K562 (cell line): ENCODE measurements at regions of chr22 and their contacts with region 1.

Region 1: DNA sequence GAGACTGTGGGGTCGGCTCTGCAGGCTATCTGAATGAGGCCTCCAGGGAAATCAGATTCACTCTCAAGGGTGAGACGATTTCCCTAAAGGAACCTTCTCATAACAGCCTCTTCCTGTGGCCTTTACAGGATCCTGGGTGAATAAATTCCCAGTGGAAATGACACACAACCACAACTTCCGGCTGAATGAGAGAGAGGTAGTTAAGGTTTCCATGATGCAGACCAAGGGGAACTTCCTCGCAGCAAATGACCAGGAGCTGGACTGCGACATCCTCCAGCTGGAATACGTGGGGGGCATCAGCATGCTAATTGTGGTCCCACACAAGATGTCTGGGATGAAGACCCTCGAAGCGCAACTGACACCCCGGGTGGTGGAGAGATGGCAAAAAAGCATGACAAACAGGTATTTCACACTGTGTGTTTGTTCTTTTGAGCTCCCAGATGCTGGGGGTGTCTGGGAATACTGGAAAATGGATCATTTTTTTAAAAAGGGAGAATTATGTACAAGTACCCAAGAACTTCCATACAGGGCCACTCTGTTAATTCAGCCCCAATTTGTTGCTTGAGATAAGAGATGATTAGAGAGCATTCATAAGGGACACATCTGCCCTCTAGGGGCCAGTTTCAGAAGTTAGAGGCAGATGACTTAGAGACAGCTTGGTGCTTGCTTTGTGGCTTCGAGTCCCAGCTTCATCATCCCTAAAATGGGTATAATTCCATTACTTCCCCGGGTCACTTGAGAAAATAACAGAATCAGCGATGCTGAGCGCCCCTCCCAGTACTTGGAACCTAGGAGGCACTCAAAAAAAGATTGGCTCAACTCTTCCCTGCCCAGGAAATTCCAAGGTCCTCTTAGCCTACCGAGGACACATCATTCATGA is 10.2 kb downstream of the SERPIND1 start:
- DNase-seq: peak; percentile 93 to 98 (median 96)
- ATAC-seq: peak; percentile 96
- H3K4me3 ChIP-seq: no peak overlapping the region
- H3K27ac ChIP-seq: no peak overlapping the region
- H3K4me1 ChIP-seq: peaks cover under 1 to 12% of the 10 kb centered on the region in 2 experiments; a peak in 3 of 5 replicates
- H3K27me3 ChIP-seq: no peaks in the 10 kb centered on the region
- CTCF ChIP-seq: peak in 2 of 3 experiments; percentile 99 to 100; a peak in 4 of 6 replicates
- EP300 ChIP-seq: peak; percentile 75; the same call in 1 of the 2 replicates
- POLR2A ChIP-seq: no peak
- RAD21 ChIP-seq: peak in 1 of 2 experiments; percentile 96; a peak in 2 of 4 replicates

Region 2: DNA sequence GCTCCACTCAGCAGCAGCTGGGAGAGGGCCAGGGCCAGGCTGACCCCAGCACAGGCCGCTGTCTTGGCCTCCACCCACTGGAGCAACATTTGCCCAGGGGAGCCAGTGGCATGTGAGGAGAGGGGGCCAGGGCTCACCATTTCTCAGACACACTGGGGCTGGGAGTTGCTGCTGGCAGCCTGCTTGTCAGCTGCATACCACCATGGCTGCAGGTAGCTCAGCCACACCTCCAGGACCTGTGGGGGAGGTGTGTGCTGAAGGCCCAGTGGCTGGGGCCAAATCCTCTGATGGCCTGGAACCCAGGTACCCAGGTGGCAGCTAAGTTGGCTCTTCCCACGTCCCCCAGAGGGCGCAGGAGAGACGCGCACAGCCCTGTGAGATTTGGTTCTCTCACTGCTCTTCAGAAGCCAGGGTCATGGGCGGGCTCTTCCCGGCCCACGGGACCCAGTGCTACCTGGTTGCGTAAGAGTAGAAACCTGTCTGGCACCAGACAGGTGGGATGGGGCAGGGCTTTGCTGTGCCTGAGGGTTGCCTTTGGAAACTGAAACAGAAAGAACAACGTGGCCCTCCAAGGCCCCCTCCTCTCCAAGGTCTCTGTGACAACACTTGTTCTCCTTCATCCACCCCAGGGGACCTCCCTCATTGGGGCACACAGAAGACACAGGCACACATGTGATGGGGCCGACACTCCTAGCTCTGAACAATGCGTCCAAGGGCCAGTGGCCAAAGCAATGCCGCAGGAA is 177.9 kb before region 1 on chr22:
- CTCF ChIA-PET with region 1: interaction called, 22 read pairs
- POLR2A ChIA-PET with region 1: interaction called, 3 read pairs
- in situ Hi-C with region 1: no loop called
- intact Hi-C with region 1: loop called (anchors 5 kb)
- DNase-seq: peak; percentile 92 to 97 (median 95)
- ATAC-seq: peak; percentile 83
- H3K4me3 ChIP-seq: no peak overlapping the region
- H3K27ac ChIP-seq: no peak overlapping the region
- H3K4me1 ChIP-seq: peaks cover 0 to 45% of the 10 kb centered on the region in 2 experiments; a peak in 2 of 5 replicates
- H3K27me3 ChIP-seq: peaks cover 58 to 99% of the 10 kb centered on the region in 2 experiments; a peak in 4 of 5 replicates
- CTCF ChIP-seq: peak; percentile 98 to 100 (median 99)
- EP300 ChIP-seq: peak; percentile 51
- POLR2A ChIP-seq: no peak
- RAD21 ChIP-seq: peak; percentile 96 to 100; a peak in 3 of 4 replicates

Region 3: DNA sequence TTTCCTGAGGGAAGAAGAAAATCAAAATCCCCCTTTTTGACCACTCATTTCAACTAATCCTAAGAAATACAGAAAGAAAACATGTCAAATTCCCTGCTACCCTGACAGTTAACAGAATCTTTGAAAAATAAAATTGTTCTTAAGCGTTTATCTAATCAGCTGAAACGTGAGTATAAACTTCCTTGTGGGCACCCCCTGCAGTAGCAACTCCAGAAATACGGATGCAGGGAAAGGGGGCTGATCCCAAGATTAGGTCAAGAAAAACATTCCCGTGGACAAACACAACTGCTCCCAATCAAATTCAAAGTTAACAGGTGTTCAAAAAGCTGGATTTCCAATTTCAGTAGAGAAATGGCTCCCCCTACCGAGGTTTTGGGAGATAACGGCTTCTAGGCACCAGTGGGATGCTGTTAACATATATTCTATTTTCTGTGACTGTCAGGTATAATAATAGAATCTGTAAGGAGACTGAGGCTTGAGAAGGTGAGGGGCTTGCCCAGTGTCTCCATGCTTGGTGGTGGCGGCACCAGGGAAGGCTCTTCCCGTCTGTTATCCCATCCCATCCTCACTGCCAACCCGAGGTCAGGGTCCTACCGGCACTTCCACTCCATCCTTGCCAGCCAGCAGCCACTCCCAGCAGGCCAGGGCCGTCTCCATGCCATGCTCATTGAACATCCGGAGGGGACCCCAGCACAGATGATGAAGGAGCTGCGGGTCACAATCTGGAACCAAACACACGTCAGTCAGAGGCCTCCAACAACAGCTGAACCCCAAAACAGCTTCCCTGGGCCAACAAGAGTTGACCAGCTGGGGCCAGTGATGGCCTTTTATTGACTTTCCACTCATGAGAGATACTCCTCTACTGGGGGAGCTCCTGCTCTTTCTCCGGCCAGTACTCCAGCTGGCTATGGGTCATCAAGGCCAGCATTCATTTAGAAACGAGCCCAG is 42.2 kb before region 1 on chr22:
- CTCF ChIA-PET with region 1: no interaction called
- POLR2A ChIA-PET with region 1: interaction called, 5 read pairs
- in situ Hi-C with region 1: no loop called
- intact Hi-C with region 1: loop called (anchors 5 kb)
- DNase-seq: peak; percentile 87 to 93 (median 90)
- ATAC-seq: peak; percentile 78
- H3K4me3 ChIP-seq: no peak overlapping the region
- H3K27ac ChIP-seq: no peak overlapping the region
- H3K4me1 ChIP-seq: no peaks in the 10 kb centered on the region
- H3K27me3 ChIP-seq: no peaks in the 10 kb centered on the region
- CTCF ChIP-seq: peak; percentile 94 to 100 (median 99)
- EP300 ChIP-seq: no peak
- POLR2A ChIP-seq: no peak
- RAD21 ChIP-seq: peak; percentile 54 to 86

Region 4: DNA sequence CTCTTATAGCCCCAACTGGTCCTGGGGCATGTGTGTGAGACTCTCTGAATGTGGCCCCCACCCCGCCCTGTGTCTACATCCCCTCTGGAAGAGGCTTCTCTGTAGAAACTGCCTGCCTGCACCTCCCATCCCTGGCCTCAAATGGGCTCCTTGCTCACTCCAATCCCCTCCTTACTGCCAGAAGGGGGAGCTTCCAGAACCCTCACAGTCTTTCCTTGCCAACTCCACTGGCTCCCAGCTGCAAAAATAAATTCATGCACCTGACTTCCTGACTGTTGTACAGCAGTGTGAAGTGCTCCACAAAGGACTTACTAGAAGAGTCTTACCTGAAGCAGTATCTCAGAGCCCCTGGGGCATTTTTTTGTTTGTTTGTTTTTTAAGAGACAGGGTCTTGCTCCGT is 25.4 kb before region 1 on chr22:
- CTCF ChIA-PET with region 1: interaction called, 12 read pairs
- POLR2A ChIA-PET with region 1: interaction called, 4 read pairs
- in situ Hi-C with region 1: no loop called
- intact Hi-C with region 1: loop called (anchors 1 kb)
- DNase-seq: peak in 1 of 4 experiments; percentile 64
- ATAC-seq: peak; percentile 86
- H3K4me3 ChIP-seq: no peak overlapping the region
- H3K27ac ChIP-seq: no peak overlapping the region
- H3K4me1 ChIP-seq: no peaks in the 10 kb centered on the region
- H3K27me3 ChIP-seq: no peaks in the 10 kb centered on the region
- CTCF ChIP-seq: peak; percentile 64 to 76 (median 75)
- EP300 ChIP-seq: no peak
- POLR2A ChIP-seq: no peak
- RAD21 ChIP-seq: peak in 1 of 2 experiments; percentile 59; a peak in 2 of 4 replicates

Region 5: GRCh38 chr22:20771918-20772625 is 12.0 kb before region 1 on chr22:
- CTCF ChIA-PET with region 1: no interaction called
- POLR2A ChIA-PET with region 1: interaction called, 27 read pairs
- in situ Hi-C with region 1: no loop called
- intact Hi-C with region 1: no loop called
- DNase-seq: no peak
- ATAC-seq: peak; percentile 50
- H3K4me3 ChIP-seq: no peak overlapping the region
- H3K27ac ChIP-seq: no peak overlapping the region
- H3K4me1 ChIP-seq: peaks cover 13 to 15% of the 10 kb centered on the region in 2 experiments
- H3K27me3 ChIP-seq: no peaks in the 10 kb centered on the region
- CTCF ChIP-seq: peak; percentile 38 to 60 (median 60)
- EP300 ChIP-seq: no peak
- POLR2A ChIP-seq: no peak
- RAD21 ChIP-seq: no peak